ENCODE measurements at regions of chr22 and their contacts with region 1.

Region 1: DNA sequence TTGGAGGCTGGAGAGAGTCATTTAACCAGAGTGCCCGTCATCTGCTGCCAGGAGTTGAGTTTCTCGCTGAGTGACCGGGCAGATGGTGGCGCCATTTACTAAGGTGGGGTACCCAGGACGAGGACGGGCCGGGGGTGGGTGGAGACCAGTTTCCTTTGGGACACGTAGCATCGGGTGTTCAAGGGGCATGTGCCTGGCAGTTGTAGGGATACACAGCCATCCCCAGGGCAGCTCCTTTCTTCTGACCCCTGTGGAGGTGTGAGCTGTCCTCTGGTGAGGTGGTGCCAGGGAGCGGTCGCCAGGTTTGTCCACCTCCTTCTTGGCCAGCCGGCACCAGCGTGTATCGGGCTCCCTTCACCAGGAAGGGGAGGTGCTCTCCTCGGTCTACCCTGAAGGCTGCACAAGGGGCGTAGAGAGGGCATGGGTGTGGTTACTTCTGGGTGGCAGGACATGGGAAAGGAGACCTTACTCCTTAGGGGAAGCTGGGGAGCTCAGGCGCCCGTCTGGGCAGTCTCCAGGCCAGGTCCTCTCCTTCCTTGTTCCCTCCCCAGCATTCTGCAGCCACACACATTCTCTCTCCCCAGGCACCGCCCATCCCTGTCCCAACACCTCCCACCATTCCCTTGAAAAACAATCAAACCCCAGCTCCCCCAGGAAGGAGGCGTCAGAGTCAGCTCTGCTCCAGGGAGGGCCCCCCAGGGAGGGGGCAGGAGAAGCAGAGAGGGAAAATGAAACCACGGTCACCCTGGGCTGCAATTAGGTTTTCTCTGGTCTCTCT is 10.3 kb upstream of the MB start:
- DNase-seq: peak; percentile 90

Region 2: DNA sequence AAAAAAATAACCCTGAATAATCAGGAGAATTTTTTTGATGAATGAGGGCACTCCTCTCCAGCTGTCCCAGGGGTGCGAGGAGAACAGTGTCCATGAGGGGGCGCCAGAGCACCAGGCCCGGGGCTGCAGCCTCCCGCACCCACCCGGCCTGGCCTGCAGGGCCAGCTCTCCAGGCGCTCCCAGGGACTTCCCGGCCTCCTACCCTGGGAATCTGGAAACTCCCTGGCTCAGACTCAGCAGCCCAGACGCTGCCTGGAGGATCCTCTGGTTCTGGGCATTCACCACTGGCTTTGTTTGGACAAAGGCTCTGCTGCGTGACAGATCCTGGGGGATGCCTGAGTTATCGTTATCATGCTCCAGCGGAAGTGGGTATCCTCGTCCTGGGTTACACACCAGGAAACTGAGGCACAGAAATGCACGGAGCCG is 196.5 kb before region 1 on chr22:
- intact Hi-C with region 1: loop called (anchors 2 kb)
- DNase-seq: peak; percentile 94

Region 3: DNA sequence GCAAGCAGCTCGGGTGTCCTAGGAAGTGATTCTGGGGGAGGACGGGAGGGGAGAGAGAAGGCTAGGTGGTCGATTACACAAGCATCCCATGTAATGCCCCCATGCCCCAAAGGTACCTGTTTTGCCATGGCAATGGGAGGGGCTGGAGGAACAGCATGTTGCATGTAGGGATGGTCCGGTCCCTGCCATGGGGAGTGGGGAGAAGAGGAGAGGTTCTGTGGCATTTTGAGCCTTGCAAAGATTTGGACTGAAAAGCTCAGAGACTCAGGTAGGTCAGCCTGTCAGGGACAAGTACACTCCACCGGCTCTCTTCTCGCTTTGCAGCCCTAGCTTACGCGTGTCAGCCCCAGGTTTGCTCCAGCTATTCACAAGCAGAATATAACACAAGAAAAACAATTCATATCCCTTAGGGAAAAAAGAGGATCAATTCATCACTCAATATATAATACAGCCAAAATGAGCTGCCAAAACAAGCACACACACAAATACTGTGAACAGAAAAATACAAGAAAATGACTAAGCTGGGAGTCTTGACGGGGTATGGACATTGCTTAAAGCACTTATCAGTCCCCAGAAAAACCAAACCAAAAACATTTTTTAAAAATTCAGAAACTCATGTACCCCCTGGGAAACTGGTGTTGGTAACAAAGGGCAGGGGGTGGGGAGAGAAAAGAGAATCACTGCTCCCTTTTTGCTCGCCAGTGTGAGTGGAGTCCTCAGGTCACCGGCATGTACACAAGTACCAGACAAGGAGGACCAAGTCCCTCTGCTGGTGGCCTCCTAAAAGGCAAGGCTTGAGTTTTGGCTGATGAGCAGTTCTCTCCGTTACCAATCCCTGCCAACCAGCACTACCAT is 111.8 kb after region 1 on chr22:
- intact Hi-C with region 1: loop called (anchors 5 kb)
- DNase-seq: no peak